ENCODE measurements at regions of chr19 and their contacts with region 1.

Region 1: DNA sequence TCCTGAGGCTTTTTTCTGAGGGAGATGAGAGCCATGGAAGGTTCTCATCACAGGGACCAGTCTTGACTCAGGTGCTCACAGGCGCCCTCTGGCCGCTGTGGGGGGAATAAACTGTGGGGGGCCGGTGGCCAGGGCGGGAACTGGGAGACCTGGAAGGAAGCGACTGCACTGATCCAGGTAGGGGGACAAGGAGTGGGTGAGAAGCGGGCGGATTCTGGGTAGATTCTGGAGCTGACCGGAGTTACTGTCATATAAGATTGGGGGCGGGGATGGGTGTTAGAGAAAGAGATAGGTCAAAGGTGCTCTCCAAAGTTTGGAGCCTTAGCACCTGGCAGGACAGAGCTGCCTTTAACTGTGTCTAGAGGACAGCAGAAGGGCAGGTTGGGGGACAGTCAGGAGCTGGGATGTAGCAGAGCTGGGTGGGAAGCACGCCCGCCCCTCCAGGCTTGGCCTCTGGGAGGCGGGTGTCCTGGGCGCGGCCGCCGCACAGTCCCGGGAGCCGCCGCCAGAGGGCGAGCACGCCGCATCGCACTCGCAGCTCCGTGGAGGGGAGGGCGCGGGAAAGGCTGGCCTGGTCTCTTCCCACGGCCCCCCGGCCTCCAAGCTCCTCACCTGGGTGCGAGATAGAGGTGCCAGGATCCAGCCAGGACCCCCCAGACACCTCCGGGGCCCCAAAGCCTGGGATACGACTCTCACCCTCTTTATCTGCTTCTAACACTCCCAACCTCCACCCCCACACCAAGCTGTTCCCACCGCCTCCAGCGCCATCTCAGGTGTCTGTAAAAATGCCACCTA is 4.2 kb upstream of the DAND5 start:
- H3K4me3 ChIP-seq: peak overlapping the region; percentile 40
- H3K27ac ChIP-seq: peak overlapping the region; percentile 60; the same call in 1 of the 2 replicates
- H3K4me1 ChIP-seq: no peaks in the 10 kb centered on the region
- CTCF ChIP-seq: peak; percentile 100

Region 2: GRCh38 chr19:12806239-12807081 is 158.8 kb before region 1 on chr19 and contains the start of gene RNASEH2A:
- CTCF ChIA-PET with region 1: no interaction called
- POLR2A ChIA-PET with region 1: no interaction called
- H3K4me3 ChIP-seq: peak within 1 kb of the TSS; percentile 68
- H3K27ac ChIP-seq: peak within 1 kb of the TSS; percentile 75
- H3K4me1 ChIP-seq: no peaks in the 10 kb centered on the region; the same call in 1 of the 2 replicates
- CTCF ChIP-seq: peak; percentile 86

Region 3: DNA sequence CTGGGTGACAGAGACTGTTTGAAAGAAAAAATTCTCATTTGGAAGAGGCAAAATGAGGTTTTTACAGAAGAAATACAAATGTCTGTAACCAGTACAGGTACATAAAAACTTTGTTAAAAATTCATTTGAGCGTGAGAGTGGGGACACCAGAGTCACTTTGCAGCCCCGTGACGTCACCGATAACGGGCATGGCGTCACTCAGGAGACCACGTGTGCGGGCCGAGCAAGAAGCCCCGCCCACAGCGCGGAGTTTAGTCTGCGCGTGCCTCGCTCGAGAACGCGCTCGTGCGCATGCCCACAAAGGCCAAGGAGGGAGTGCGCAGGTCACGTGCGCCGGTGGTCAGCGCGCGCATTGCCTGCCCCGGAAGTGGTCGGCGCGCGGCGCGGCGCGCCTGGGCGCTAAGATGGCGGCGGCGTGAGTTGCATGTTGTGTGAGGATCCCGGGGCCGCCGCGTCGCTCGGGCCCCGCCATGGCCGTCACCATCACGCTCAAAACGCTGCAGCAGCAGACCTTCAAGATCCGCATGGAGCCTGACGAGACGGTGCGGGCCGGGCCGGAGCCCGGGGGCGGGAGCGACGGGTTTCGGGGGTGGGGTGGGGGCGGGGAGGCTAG is 19.6 kb before region 1 on chr19 and contains the start of gene RAD23A:
- CTCF ChIA-PET with region 1: interaction called, 31 read pairs
- POLR2A ChIA-PET with region 1: interaction called, 5 read pairs
- H3K4me3 ChIP-seq: peak within 1 kb of the TSS; percentile 84
- H3K27ac ChIP-seq: peak within 1 kb of the TSS; percentile 83
- H3K4me1 ChIP-seq: peaks cover 3% of the 10 kb centered on the region; the same call in 1 of the 2 replicates
- CTCF ChIP-seq: no peak

Region 4: GRCh38 chr19:13002166-13002898 is 37.1 kb after region 1 on chr19:
- CTCF ChIA-PET with region 1: interaction called, 10 read pairs
- POLR2A ChIA-PET with region 1: no interaction called
- H3K4me3 ChIP-seq: no peak overlapping the region
- H3K27ac ChIP-seq: no peak overlapping the region
- H3K4me1 ChIP-seq: no peaks in the 10 kb centered on the region
- CTCF ChIP-seq: no peak

Region 5: DNA sequence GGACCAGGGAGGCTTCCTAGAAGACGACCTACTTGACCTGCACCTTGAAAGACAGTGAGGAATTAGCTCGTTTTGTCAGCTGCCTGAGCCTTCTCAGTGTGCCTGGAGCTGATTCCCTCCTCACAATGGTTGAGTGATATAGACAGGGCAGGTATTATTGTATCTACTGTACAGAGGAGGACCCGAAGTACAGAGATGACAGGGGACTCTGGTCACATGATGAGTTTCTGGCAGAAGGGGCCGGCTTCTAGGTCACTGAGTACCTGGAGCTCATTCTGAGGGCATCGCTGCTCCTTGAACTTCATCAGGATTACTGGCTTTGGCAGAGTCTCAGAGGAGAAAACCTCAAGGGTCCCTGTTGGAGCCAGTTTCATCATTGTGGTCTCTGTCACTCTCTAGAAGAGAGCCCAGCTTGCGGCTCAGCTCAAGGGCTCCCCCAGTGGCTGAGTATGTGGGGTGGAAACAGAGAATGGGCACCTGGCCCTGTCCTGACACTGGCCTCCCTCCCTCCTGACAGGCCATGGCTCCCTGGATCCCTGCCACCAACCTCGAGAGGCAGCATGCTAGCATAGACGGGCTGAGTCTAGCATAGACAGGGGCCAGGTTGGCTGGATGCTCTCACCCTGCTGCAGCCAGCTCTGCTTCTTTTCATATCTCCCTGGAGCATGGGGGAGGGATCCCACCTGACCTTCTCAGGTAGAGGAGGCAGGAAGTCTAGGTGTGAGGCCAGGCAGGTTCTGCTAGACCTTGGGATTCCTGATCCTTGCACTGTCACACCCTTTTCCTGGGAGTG is 68.8 kb after region 1 on chr19:
- CTCF ChIA-PET with region 1: interaction called, 22 read pairs
- POLR2A ChIA-PET with region 1: no interaction called
- H3K4me3 ChIP-seq: no peak overlapping the region
- H3K27ac ChIP-seq: no peak overlapping the region
- H3K4me1 ChIP-seq: peaks cover 29% of the 10 kb centered on the region
- CTCF ChIP-seq: peak; percentile 76

Region 6: GRCh38 chr19:13060964-13061927 is 96.0 kb after region 1 on chr19:
- CTCF ChIA-PET with region 1: interaction called, 66 read pairs
- POLR2A ChIA-PET with region 1: interaction called, 3 read pairs
- H3K4me3 ChIP-seq: no peak overlapping the region
- H3K27ac ChIP-seq: no peak overlapping the region
- H3K4me1 ChIP-seq: peaks cover 25% of the 10 kb centered on the region
- CTCF ChIP-seq: peak; percentile 90

Region 7: GRCh38 chr19:13093407-13094105 is 128.3 kb after region 1 on chr19:
- CTCF ChIA-PET with region 1: interaction called, 46 read pairs
- POLR2A ChIA-PET with region 1: interaction called, 6 read pairs
- H3K4me3 ChIP-seq: no peak overlapping the region
- H3K27ac ChIP-seq: no peak overlapping the region
- H3K4me1 ChIP-seq: no peaks in the 10 kb centered on the region
- CTCF ChIP-seq: peak; percentile 95

Measured in HEK293 (cell line).